HCT116 (cell line): ENCODE measurements at regions of chr3 and their contacts with region 1.

Region 1: GRCh38 chr3:36124118-36124796 is 256.0 kb upstream of the STAC start:
- DNase-seq: peak; percentile 4
- ATAC-seq: peak; percentile 50; the same call in 1 of the 2 replicates
- H3K4me3 ChIP-seq: no peak overlapping the region
- H3K27ac ChIP-seq: no peak overlapping the region
- H3K4me1 ChIP-seq: no peaks in the 10 kb centered on the region
- H3K27me3 ChIP-seq: no peaks in the 10 kb centered on the region
- CTCF ChIP-seq: peak; percentile 13 to 48 (median 34); a peak in 3 of 6 replicates
- POLR2A ChIP-seq: no peak
- RAD21 ChIP-seq: peak; percentile 40

Region 2: GRCh38 chr3:35639254-35640186 is 484.7 kb before region 1 on chr3 and contains the start of gene ARPP21:
- CTCF ChIA-PET with region 1: no interaction called
- POLR2A ChIA-PET with region 1: no interaction called
- RAD21 ChIA-PET with region 1: no interaction called
- intact Hi-C with region 1: no loop called
- DNase-seq: no peak
- ATAC-seq: no peak
- H3K4me3 ChIP-seq: no peak within 1 kb of the TSS
- H3K27ac ChIP-seq: no peak within 1 kb of the TSS
- H3K4me1 ChIP-seq: no peaks in the 10 kb centered on the region
- H3K27me3 ChIP-seq: no peaks in the 10 kb centered on the region
- CTCF ChIP-seq: no peak
- POLR2A ChIP-seq: no peak
- RAD21 ChIP-seq: no peak
- total RNA-seq, gene ARPP21: not detected

Region 3: DNA sequence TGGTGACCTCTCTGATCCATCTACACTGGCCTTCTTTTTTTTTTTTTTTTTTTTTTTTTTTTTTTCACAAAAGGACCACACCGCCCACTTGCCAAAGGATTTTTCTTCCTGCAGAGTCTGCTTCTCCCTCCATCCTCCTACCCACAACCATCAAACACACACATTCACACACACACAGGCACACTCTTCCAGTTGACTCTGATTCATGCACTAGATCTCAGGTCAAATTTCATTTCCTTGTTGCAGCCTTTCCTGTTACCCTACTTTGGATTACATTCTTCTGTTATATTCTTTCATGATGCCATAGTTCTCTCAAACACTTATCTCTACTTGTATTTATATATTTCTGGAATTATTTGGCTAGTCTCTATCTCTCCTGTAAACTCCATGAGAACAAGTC is 389.9 kb after region 1 on chr3:
- CTCF ChIA-PET with region 1: no interaction called
- POLR2A ChIA-PET with region 1: no interaction called
- RAD21 ChIA-PET with region 1: no interaction called
- intact Hi-C with region 1: no loop called
- DNase-seq: no peak
- ATAC-seq: no peak
- H3K4me3 ChIP-seq: no peak overlapping the region
- H3K27ac ChIP-seq: no peak overlapping the region
- H3K4me1 ChIP-seq: no peaks in the 10 kb centered on the region
- H3K27me3 ChIP-seq: no peaks in the 10 kb centered on the region
- CTCF ChIP-seq: no peak
- POLR2A ChIP-seq: no peak
- RAD21 ChIP-seq: no peak

Region 4: DNA sequence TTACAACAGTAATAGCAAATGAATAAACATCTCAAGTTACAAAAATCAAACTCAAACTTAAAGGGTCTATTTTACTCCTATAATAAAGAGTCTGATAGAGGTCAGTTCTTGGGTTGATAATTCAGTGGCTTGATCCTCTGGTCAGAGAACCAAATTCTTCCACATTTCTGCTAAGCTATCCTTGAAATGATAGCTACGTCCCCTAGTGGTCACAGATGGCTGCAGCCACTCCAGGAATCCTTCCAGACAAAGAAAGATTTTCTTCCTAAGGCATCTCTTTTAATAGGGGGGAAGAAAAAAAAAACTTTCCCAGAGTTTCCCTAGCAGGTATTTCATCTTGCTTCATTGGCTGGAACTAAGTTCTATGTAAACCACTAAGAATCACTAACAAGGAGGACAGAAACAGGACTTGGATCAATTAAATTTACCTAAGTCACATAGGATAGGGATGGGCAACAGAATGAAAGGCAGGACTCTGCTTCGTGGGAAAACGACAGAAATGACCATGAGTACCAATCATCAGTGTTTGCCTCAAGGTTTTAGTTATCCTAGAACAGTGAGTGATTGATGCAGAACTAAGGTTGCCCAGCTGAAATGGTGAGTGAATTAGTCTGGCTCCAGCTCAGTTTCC is 416.7 kb after region 1 on chr3:
- CTCF ChIA-PET with region 1: no interaction called
- POLR2A ChIA-PET with region 1: no interaction called
- RAD21 ChIA-PET with region 1: no interaction called
- intact Hi-C with region 1: loop called (anchors 10 kb)
- DNase-seq: peak; percentile 12
- ATAC-seq: peak; percentile 68
- H3K4me3 ChIP-seq: no peak overlapping the region
- H3K27ac ChIP-seq: no peak overlapping the region
- H3K4me1 ChIP-seq: no peaks in the 10 kb centered on the region
- H3K27me3 ChIP-seq: 0 out of 2 replicates have a peak, but pooled peaks cover 5% of the 10 kb centered on the region
- CTCF ChIP-seq: peak; percentile 44 to 88 (median 84); a peak in 5 of 6 replicates
- POLR2A ChIP-seq: no peak
- RAD21 ChIP-seq: peak; percentile 59